ENCODE measurements at regions of chr5 and their contacts with region 1.

Region 1: GRCh38 chr5:160021831-160022446 is 13.0 kb downstream of the TTC1 start:
- DNase-seq: peak; percentile 53
- H3K4me3 ChIP-seq: no peak overlapping the region
- H3K27ac ChIP-seq: no peak overlapping the region
- H3K4me1 ChIP-seq: no peaks in the 10 kb centered on the region
- H3K27me3 ChIP-seq: no peaks in the 10 kb centered on the region
- CTCF ChIP-seq: peak; percentile 71 to 78

Region 2: DNA sequence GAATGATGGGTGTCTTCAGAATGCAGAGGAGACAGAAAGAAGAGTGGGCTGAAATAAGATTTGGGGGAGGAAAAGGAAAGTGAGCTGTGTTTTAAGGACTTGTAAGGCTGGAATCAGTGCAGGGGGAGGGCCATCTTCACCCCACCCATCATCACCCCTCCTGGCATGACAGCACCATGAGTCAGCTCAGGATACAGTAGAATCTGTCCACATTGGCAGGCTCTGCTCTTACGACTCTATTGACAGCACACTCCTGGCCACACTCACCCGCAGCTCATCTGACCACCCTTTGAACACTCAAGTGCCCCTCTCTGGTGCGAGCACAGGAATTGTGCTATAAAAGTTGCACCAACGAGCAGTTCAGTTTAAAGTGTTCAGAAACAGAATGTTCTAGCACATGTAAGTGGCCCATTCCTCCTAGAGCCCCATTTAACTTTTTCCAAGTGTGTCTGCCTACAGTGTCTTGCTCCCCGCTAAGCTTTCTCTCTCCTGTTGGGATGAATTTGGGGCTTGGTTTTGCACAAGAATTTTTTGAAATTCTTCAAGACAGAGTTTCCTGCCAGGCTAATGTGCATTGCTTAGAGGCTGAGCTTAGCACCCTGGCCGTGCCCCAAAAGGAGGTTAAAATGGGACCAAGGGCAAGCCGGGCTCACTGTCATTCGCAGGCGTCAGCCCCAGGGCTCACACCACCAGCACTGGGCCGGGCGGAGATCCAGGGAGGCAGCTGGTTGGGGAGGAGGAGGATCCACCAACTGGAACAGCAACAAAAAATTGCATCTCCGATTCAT is 93.6 kb before region 1 on chr5:
- CTCF ChIA-PET with region 1: no interaction called
- dilution Hi-C with region 1: no loop called
- in situ Hi-C with region 1: no loop called
- intact Hi-C with region 1: no loop called
- DNase-seq: peak; percentile 90
- H3K4me3 ChIP-seq: no peak overlapping the region
- H3K27ac ChIP-seq: peak overlapping the region; percentile 70
- H3K4me1 ChIP-seq: peaks cover 19% of the 10 kb centered on the region
- H3K27me3 ChIP-seq: no peaks in the 10 kb centered on the region
- CTCF ChIP-seq: no peak

Region 3: GRCh38 chr5:160159991-160160792 is 138.3 kb after region 1 on chr5:
- CTCF ChIA-PET with region 1: no interaction called
- dilution Hi-C with region 1: no loop called
- in situ Hi-C with region 1: no loop called
- intact Hi-C with region 1: loop called (anchors 2 kb)
- DNase-seq: peak; percentile 21
- H3K4me3 ChIP-seq: no peak overlapping the region
- H3K27ac ChIP-seq: no peak overlapping the region
- H3K4me1 ChIP-seq: peaks cover 21% of the 10 kb centered on the region
- H3K27me3 ChIP-seq: no peaks in the 10 kb centered on the region
- CTCF ChIP-seq: no peak

Region 4: DNA sequence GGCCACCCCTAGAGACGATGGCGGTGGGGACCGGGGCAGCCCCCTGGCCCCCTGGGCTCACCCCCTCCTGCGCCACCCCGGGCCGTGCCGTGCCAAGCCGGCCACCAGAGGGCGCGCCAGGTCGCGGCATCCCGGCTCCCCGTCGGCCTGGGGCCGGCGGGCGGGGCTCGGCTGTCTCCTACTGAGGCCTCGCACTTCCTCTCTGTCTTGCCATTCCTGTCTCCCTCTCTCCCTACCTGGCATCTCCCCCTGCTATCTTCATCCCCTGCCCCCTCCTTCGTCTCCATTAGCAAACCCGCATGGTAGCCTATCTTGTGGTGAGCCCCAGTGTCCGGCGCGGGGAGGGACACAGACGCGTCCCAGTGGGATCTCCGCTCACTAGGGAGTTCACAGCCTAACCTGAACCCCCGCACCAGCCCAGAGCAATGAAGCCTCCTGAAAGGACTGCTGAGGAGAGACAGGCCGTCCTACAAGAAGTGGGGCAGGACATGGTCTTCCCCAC is 177.5 kb after region 1 on chr5:
- CTCF ChIA-PET with region 1: interaction called, 5 read pairs
- dilution Hi-C with region 1: no loop called
- in situ Hi-C with region 1: no loop called
- intact Hi-C with region 1: loop called (anchors 1 kb)
- DNase-seq: peak; percentile 39
- H3K4me3 ChIP-seq: peak overlapping the region in 2 of 3 experiments; percentile 12 to 38
- H3K27ac ChIP-seq: no peak overlapping the region
- H3K4me1 ChIP-seq: no peaks in the 10 kb centered on the region
- H3K27me3 ChIP-seq: no peaks in the 10 kb centered on the region
- CTCF ChIP-seq: peak; percentile 60 to 75

Region 5: DNA sequence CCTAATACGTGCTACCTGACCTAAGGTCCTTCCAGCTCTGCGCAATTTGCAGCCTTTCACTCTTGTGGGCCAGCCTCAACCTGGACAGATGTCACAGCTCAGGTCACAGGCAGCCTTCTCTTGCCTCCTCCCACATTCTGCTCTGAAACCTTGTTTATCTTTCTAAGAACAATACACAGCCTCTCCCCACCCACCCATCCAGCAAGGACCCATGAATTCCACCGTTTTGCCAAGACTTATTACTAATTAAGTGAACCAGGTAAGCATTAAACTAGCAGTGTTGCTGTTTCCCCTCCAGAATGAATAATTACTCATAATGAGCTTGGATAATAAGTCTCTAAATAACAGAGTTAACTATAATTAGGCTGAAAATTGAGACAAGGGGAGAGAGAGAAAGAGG is 218.4 kb after region 1 on chr5:
- CTCF ChIA-PET with region 1: interaction called, 3 read pairs
- dilution Hi-C with region 1: no loop called
- in situ Hi-C with region 1: no loop called
- intact Hi-C with region 1: loop called (anchors 5 kb)
- DNase-seq: no peak
- H3K4me3 ChIP-seq: no peak overlapping the region
- H3K27ac ChIP-seq: no peak overlapping the region
- H3K4me1 ChIP-seq: no peaks in the 10 kb centered on the region
- H3K27me3 ChIP-seq: no peaks in the 10 kb centered on the region
- CTCF ChIP-seq: no peak

Region 6: GRCh38 chr5:160382346-160382745 is 360.4 kb after region 1 on chr5:
- CTCF ChIA-PET with region 1: no interaction called
- dilution Hi-C with region 1: no loop called
- in situ Hi-C with region 1: loop called in 1 of 2 experiments (anchors 10 kb)
- intact Hi-C with region 1: no loop called
- DNase-seq: no peak
- H3K4me3 ChIP-seq: no peak overlapping the region
- H3K27ac ChIP-seq: no peak overlapping the region
- H3K4me1 ChIP-seq: no peaks in the 10 kb centered on the region
- H3K27me3 ChIP-seq: peaks cover 7% of the 10 kb centered on the region
- CTCF ChIP-seq: no peak

Region 7: GRCh38 chr5:160390787-160391696 is 369.1 kb after region 1 on chr5:
- CTCF ChIA-PET with region 1: no interaction called
- dilution Hi-C with region 1: no loop called
- in situ Hi-C with region 1: loop called in 1 of 2 experiments (anchors 10 kb)
- intact Hi-C with region 1: loop called (anchors 2 kb)
- DNase-seq: no peak
- H3K4me3 ChIP-seq: no peak overlapping the region
- H3K27ac ChIP-seq: no peak overlapping the region
- H3K4me1 ChIP-seq: no peaks in the 10 kb centered on the region
- H3K27me3 ChIP-seq: no peaks in the 10 kb centered on the region
- CTCF ChIP-seq: peak; percentile 41 to 45

Region 8: DNA sequence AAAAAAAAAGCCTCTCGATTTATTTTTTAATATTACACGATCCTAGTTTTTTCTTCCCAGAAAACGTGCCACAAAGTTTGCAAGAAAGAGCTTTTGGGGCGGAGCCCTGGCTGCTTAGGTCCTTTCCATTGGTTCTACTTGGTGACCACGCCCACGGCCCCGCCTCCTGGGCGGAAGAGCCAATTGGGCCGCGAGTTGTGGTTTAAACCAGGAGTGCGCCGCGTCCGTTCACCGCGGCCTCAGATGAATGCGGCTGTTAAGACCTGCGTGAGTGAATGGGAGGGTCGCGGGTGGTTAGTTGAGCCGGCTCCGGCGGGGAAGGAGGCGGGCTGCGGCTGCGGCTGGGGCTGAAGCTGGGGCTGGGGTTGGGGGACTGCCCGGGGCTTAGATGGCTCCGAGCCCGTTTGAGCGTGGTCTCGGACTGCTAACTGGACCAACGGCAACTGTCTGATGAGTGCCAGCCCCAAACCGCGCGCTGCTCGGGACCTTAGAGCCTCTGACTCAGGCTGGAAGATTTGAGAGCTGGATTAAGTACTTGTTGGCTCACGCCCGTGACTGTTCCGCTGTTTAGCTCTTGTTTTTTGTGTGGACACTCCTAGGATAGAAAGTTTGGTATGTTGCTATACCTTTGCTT is 399.8 kb after region 1 on chr5 and contains the start of gene PTTG1:
- CTCF ChIA-PET with region 1: interaction called, 13 read pairs
- dilution Hi-C with region 1: no loop called
- in situ Hi-C with region 1: no loop called
- intact Hi-C with region 1: no loop called
- DNase-seq: peak; percentile 96
- H3K4me3 ChIP-seq: peak within 1 kb of the TSS; percentile 76 to 88 (median 81)
- H3K27ac ChIP-seq: peak within 1 kb of the TSS; percentile 89
- H3K4me1 ChIP-seq: peaks cover 37% of the 10 kb centered on the region
- H3K27me3 ChIP-seq: no peaks in the 10 kb centered on the region
- CTCF ChIP-seq: no peak
- total RNA-seq, gene PTTG1: 28.5 to 106 TPM

Measured in mammary epithelial cell (primary cell).